ENCODE measurements at regions of chr12 and their contacts with region 1.

Region 1: GRCh38 chr12:52895061-52895887 is 9.6 kb downstream of the KRT8 start:
- DNase-seq: no peak
- ATAC-seq: peak in 2 of 4 donors; percentile 26 to 35
- H3K4me3 ChIP-seq: no peak overlapping the region
- H3K27ac ChIP-seq: no peak overlapping the region
- H3K4me1 ChIP-seq: peaks cover 0 to 5% (median 0%) of the 10 kb centered on the region in 12 donors
- H3K27me3 ChIP-seq: no peaks in the 10 kb centered on the region
- CTCF ChIP-seq: no peak
- POLR2A ChIP-seq: no peak

Region 2: DNA sequence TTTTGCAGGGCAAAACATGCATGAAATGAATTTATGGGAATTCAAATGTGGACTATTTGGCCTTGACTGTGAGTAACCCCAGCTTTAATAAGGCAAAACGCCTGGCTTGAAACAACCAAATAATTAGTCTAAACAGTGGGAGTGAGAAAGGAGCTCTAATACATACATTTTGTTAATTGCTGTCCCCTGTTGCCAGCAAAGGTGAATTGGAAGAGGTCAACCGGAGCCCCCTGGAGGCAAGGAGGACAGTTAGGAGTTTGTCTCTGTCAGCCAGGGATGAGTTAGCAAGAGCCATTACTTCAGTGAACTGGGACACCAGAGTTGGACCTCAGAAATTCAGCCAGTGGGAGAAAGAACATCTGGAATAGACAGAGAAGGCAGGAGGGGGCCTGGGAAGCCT is 135.6 kb before region 1 on chr12:
- intact Hi-C with region 1: no loop called
- DNase-seq: no peak
- ATAC-seq: no peak
- H3K4me3 ChIP-seq: no peak overlapping the region
- H3K27ac ChIP-seq: no peak overlapping the region
- H3K4me1 ChIP-seq: no peaks in the 10 kb centered on the region
- H3K27me3 ChIP-seq: peaks cover 0 to 13% (median 6%) of the 10 kb centered on the region in 9 donors
- CTCF ChIP-seq: no peak
- POLR2A ChIP-seq: no peak

Region 3: GRCh38 chr12:52913076-52913821 is 18.0 kb after region 1 on chr12:
- intact Hi-C with region 1: no loop called
- DNase-seq: no peak
- ATAC-seq: no peak
- H3K4me3 ChIP-seq: no peak overlapping the region
- H3K27ac ChIP-seq: no peak overlapping the region
- H3K4me1 ChIP-seq: no peaks in the 10 kb centered on the region
- H3K27me3 ChIP-seq: no peaks in the 10 kb centered on the region
- CTCF ChIP-seq: no peak
- POLR2A ChIP-seq: no peak

Region 4: GRCh38 chr12:52925717-52926595 is 30.7 kb after region 1 on chr12:
- intact Hi-C with region 1: loop called in 1 of 10 experiments (anchors 2 kb)
- DNase-seq: no peak
- ATAC-seq: no peak
- H3K4me3 ChIP-seq: no peak overlapping the region
- H3K27ac ChIP-seq: no peak overlapping the region
- H3K4me1 ChIP-seq: peaks cover 0 to 33% (median 12%) of the 10 kb centered on the region in 12 donors
- H3K27me3 ChIP-seq: no peaks in the 10 kb centered on the region
- CTCF ChIP-seq: no peak
- POLR2A ChIP-seq: no peak

Region 5: GRCh38 chr12:52969828-52970569 is 74.7 kb after region 1 on chr12:
- intact Hi-C with region 1: loop called in 2 of 10 experiments (anchors 5 kb)
- DNase-seq: peak in 4 of 5 donors; percentile 34 to 79 (median 62)
- ATAC-seq: peak in 3 of 4 donors; percentile 39 to 88 (median 81)
- H3K4me3 ChIP-seq: no peak overlapping the region
- H3K27ac ChIP-seq: no peak overlapping the region
- H3K4me1 ChIP-seq: peaks cover 0 to 9% (median 1%) of the 10 kb centered on the region in 12 donors
- H3K27me3 ChIP-seq: peaks cover 6 to 29% (median 14%) of the 10 kb centered on the region in 9 donors
- CTCF ChIP-seq: no peak
- POLR2A ChIP-seq: no peak